ENCODE measurements at regions of chr6 and their contacts with region 1.

Region 1: GRCh38 chr6:30742316-30743098 is at the start of gene FLOT1:
- DNase-seq: peak; percentile 97 to 99 (median 98)
- ATAC-seq: peak; percentile 88 to 95 (median 91)
- H3K4me3 ChIP-seq: peak within 1 kb of the TSS; percentile 46 to 95 (median 86)
- H3K27ac ChIP-seq: peak within 1 kb of the TSS; percentile 92 to 99 (median 97)
- H3K4me1 ChIP-seq: peaks cover 3 to 63% (median 37%) of the 10 kb centered on the region in 12 donors
- H3K27me3 ChIP-seq: no peaks in the 10 kb centered on the region
- CTCF ChIP-seq: peak in 2 of 12 donors; percentile 6 to 21
- POLR2A ChIP-seq: peak in 1 of 2 donors; percentile 64
- total RNA-seq, gene FLOT1: 166 to 282 (median 211) TPM

Region 2: GRCh38 chr6:30238174-30238795 is 504.2 kb before region 1 on chr6:
- intact Hi-C with region 1: no loop called
- DNase-seq: no peak
- ATAC-seq: no peak
- H3K4me3 ChIP-seq: no peak overlapping the region
- H3K27ac ChIP-seq: no peak overlapping the region
- H3K4me1 ChIP-seq: no peaks in the 10 kb centered on the region
- H3K27me3 ChIP-seq: no peaks in the 10 kb centered on the region
- CTCF ChIP-seq: peak in 5 of 12 donors; percentile 9 to 29 (median 18)
- POLR2A ChIP-seq: no peak

Region 3: GRCh38 chr6:30717042-30717844 is 25.3 kb before region 1 on chr6 and contains the start of gene MDC1:
- intact Hi-C with region 1: loop called in 2 of 10 experiments (anchors 2 kb)
- DNase-seq: peak; percentile 100
- ATAC-seq: peak; percentile 83 to 91 (median 87)
- H3K4me3 ChIP-seq: peak within 1 kb of the TSS; percentile 45 to 93 (median 73)
- H3K27ac ChIP-seq: peak within 1 kb of the TSS; percentile 80 to 97 (median 91)
- H3K4me1 ChIP-seq: peaks cover 0 to 40% (median 29%) of the 10 kb centered on the region in 12 donors
- H3K27me3 ChIP-seq: no peaks in the 10 kb centered on the region
- CTCF ChIP-seq: peak in 10 of 12 donors; percentile 4 to 50 (median 36)
- POLR2A ChIP-seq: peak; percentile 25 to 87
- total RNA-seq, gene MDC1: 10.6 to 25.0 (median 17.5) TPM

Region 4: GRCh38 chr6:30781743-30782424 is 39.4 kb after region 1 on chr6:
- intact Hi-C with region 1: loop called in 9 of 10 experiments (anchors 2 to 5 kb)
- DNase-seq: peak; percentile 97 to 98 (median 97)
- ATAC-seq: peak; percentile 87 to 96 (median 92)
- H3K4me3 ChIP-seq: peak overlapping the region in 10 of 12 donors; percentile 0 to 32 (median 18)
- H3K27ac ChIP-seq: peak overlapping the region; percentile 72 to 97 (median 94)
- H3K4me1 ChIP-seq: peaks cover 0 to 96% (median 44%) of the 10 kb centered on the region in 12 donors
- H3K27me3 ChIP-seq: no peaks in the 10 kb centered on the region
- CTCF ChIP-seq: no peak
- POLR2A ChIP-seq: peak in 1 of 2 donors; percentile 51

Region 5: DNA sequence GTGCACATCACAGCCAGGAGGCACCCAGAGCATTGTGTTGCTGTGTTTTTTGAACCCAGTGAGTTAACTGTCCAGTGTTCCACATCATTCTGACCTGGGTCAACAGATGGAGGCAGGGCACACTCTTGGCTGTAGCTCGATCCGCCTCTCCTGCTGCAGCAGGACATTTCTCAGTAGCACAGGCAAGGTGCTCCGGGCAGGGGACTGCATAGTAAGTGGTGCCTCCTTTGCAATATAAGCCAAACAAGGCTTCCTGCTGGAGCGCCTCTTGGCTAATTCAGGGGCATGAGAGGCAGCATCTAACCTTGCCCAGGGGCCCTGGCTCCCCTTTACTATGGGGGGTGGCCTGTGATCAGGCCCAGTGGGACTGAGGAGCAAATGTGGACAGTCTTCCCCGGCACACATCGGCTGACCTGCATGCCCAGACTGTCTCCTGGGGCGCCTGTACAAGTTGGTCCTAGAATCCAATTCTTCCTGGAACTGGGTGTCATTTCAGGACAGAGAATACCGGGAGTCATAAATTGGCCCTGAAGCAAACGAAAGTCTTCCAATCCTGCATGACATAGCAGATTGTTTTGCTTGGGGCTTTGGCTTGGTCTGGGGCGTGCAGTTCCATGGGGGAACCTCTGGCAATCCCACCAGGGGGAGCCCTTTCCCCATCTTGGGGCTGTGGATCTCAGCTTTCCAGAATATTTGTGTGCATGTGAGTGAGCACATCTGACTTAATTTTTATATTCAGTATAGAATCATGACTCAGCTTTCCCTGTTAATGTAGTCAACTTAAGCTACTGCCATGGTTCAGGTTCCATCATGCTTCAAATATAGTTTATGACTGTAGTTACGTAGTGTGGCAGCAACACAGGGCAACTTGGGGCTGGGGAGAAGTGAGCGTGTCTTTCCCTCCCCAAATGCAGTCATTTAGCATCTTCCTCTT is 85.8 kb after region 1 on chr6:
- intact Hi-C with region 1: loop called in 9 of 10 experiments (anchors 2 to 10 kb)
- DNase-seq: peak; percentile 84 to 90 (median 89)
- ATAC-seq: peak; percentile 90 to 95 (median 94)
- H3K4me3 ChIP-seq: peak overlapping the region in 6 of 12 donors; percentile 6 to 44 (median 14)
- H3K27ac ChIP-seq: peak overlapping the region; percentile 11 to 86 (median 75)
- H3K4me1 ChIP-seq: peaks cover 0 to 53% (median 16%) of the 10 kb centered on the region in 12 donors
- H3K27me3 ChIP-seq: no peaks in the 10 kb centered on the region
- CTCF ChIP-seq: peak; percentile 92 to 98 (median 94)
- POLR2A ChIP-seq: peak in 1 of 2 donors; percentile 15

Region 6: GRCh38 chr6:31007694-31008093 is 265.2 kb after region 1 on chr6:
- intact Hi-C with region 1: loop called in 1 of 10 experiments (anchors 10 kb)
- DNase-seq: no peak
- ATAC-seq: peak in 2 of 4 donors; percentile 25 to 68
- H3K4me3 ChIP-seq: no peak overlapping the region
- H3K27ac ChIP-seq: no peak overlapping the region
- H3K4me1 ChIP-seq: peaks cover 0 to 19% (median 11%) of the 10 kb centered on the region in 12 donors
- H3K27me3 ChIP-seq: peaks cover 0 to 3% (median 0%) of the 10 kb centered on the region in 9 donors
- CTCF ChIP-seq: no peak
- POLR2A ChIP-seq: no peak

Region 7: DNA sequence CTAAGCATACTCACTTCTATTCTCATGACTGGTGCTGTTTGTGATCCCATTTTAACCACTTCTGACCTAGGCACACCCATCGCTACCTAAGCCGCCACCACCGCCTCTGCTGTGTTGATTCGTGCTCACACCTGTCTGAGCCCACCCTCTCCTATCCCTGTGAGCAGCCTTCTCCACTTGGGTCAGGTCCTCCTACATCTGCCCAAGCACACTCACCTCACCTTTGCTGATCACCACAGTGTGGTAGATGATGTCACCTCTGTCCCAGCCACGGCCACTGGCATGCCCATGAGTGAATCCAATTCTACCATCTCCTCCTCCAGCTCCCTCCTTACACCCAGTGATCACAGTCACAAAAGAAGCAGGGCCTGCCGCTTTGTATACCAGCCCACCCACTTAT is 288.6 kb after region 1 on chr6:
- intact Hi-C with region 1: no loop called
- DNase-seq: no peak
- ATAC-seq: no peak
- H3K4me3 ChIP-seq: no peak overlapping the region
- H3K27ac ChIP-seq: no peak overlapping the region
- H3K4me1 ChIP-seq: no peaks in the 10 kb centered on the region
- H3K27me3 ChIP-seq: no peaks in the 10 kb centered on the region
- CTCF ChIP-seq: no peak
- POLR2A ChIP-seq: no peak

Region 8: DNA sequence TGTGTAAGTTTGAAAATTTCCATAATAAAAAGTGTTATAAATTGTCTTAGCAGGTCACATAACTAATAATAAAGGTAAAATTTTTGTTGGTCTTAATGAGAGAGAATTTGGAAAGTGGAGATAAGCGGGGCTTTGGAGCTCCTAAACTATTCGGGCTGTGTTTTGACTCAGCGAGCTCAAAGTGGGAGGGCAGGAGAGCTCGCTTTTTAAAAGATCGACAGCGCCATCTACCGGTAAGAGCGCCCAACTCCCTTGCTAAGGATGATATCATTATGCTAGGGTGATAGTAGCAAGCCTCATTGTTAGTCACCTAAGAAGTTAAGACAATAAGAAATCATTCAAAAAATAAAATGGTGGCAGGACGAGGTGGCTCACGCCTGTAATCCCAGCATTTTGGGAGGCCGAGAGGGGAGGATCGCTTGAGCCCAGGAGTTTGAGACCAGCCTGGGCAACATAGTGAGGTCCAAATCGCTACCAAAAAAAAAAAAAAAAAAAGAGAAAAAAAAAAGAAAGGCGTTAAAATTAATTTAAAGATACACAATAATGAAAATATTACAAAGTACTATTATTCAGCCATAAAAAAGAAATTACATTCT is 345.1 kb after region 1 on chr6:
- intact Hi-C with region 1: loop called in 1 of 10 experiments (anchors 10 kb)
- DNase-seq: peak; percentile 80 to 89 (median 86)
- ATAC-seq: peak; percentile 75 to 95 (median 94)
- H3K4me3 ChIP-seq: no peak overlapping the region
- H3K27ac ChIP-seq: no peak overlapping the region
- H3K4me1 ChIP-seq: peaks cover 0 to 15% (median 5%) of the 10 kb centered on the region in 12 donors
- H3K27me3 ChIP-seq: peaks cover 0 to 6% (median 0%) of the 10 kb centered on the region in 9 donors
- CTCF ChIP-seq: peak; percentile 46 to 86 (median 80)
- POLR2A ChIP-seq: no peak